A673 (cell line): ENCODE measurements at regions of chr13 and their contacts with region 1.

Region 1: DNA sequence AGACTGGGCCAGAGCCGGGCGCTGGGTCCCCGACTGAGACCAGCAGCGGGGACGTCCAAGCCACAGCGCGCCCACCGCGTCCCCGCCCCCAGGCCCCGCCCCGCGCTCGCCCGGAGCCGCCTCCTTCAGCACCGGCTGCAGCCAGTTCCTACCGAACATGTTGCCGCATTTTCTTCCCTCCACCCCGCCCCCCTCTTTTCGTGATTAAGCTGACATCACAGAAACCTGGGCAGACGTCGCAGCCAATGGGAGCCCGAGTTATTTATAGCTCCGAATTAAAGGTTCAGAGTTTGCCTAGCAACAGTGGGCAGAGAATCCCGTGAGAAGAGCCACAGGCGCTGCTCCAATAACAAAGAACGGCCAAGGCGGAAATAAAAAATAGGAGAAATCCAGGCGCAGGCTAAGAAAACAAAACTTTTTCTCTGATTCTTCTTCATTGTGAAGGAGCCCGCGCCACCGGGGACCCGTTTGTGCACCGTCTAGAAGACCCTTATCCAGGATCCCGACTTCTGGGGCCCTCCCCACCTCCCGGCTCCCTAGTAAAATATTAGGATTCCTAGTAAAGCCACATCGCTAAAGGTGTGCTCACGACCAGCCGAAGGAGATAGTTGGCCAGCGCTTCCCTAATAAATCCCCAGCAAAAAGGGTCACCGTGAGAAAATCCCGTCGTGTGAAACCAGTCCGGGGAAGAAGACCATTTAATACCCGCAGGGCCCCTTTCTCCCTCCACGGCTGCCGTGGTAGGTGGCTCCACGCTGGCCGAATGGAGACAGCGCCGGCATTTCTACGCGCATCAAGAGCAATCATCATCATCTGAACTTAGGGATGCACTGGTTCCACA is 61.7 kb downstream of the SERP2 start:
- DNase-seq: peak; percentile 99
- H3K4me3 ChIP-seq: peak overlapping the region; percentile 69
- H3K27ac ChIP-seq: peak overlapping the region; percentile 92
- H3K4me1 ChIP-seq: peaks cover 13% of the 10 kb centered on the region
- H3K27me3 ChIP-seq: no peaks in the 10 kb centered on the region
- CTCF ChIP-seq: no peak

Region 2: DNA sequence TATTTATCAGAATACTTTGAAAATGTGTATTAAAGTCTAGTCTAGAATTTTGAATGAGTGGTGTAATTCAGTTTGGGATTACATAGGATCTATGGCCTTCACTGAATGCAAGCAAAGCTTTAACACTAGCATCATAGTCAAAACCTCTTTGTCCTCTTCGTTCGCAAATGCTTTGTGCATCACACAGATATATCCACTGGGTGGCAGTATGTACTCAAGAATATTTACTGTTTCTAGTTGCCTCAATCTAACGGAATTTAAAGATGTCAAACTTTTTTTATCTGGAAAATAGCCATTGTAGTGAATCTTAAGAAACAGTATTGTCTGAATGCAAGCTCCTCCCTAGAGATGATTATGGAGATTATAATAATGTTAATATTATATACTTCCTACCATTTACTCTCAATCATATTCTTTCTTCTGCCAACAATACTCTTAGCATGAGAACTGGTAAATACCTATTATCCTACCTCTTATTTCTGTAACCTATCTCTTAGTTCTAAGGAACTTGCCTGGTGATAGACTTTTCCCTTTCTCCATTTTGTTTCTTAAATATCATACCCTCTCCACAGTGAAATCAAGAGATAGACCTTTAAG is 529.8 kb before region 1 on chr13:
- CTCF ChIA-PET with region 1: interaction called, 12 read pairs
- POLR2A ChIA-PET with region 1: no interaction called
- intact Hi-C with region 1: loop called (anchors 1 kb)
- DNase-seq: peak; percentile 76
- H3K4me3 ChIP-seq: no peak overlapping the region
- H3K27ac ChIP-seq: no peak overlapping the region
- H3K4me1 ChIP-seq: no peaks in the 10 kb centered on the region
- H3K27me3 ChIP-seq: no peaks in the 10 kb centered on the region
- CTCF ChIP-seq: peak; percentile 78

Region 3: GRCh38 chr13:44141725-44142539 is 293.4 kb before region 1 on chr13:
- CTCF ChIA-PET with region 1: interaction called, 3 read pairs
- POLR2A ChIA-PET with region 1: no interaction called
- intact Hi-C with region 1: loop called (anchors 5 kb)
- DNase-seq: peak; percentile 89
- H3K4me3 ChIP-seq: peak overlapping the region; percentile 59
- H3K27ac ChIP-seq: peak overlapping the region; percentile 87
- H3K4me1 ChIP-seq: peaks cover 9% of the 10 kb centered on the region
- H3K27me3 ChIP-seq: no peaks in the 10 kb centered on the region
- CTCF ChIP-seq: no peak

Region 4: DNA sequence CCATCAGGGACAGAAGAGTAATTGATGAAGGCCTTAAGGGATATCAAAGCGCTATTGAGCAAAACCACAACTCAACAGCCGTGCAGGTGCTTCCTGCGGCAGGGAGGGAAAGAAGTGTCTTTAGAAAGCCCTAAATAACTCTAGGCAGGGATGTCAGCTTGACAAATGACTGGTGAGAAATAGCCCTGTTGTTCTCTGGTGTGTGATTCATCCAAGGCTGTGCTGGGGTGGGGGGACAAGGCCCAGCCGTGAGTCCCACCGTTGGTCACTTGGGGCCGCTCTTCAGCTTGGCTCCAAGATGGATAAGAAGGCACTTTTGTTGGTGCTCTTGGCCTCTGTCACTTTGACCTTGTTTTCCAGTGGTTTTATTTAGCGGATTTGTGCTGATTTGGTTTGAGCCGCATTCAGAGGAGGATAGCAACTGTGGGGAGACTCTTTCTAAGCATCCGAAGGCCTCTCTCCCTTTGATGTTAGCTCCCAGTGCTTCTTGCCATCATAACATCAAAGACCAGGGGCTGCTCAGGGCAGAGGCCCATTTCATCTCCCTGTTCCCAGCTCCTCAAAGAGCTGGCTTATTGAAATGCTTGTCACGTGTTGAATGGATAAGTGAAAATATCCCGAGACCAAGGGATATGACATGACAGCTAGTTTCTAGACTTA is 192.0 kb before region 1 on chr13:
- CTCF ChIA-PET with region 1: no interaction called
- POLR2A ChIA-PET with region 1: no interaction called
- intact Hi-C with region 1: loop called (anchors 5 kb)
- DNase-seq: peak; percentile 26
- H3K4me3 ChIP-seq: no peak overlapping the region
- H3K27ac ChIP-seq: no peak overlapping the region
- H3K4me1 ChIP-seq: no peaks in the 10 kb centered on the region
- H3K27me3 ChIP-seq: no peaks in the 10 kb centered on the region
- CTCF ChIP-seq: peak; percentile 38

Region 5: GRCh38 chr13:44364348-44365049 is 70.9 kb before region 1 on chr13:
- CTCF ChIA-PET with region 1: no interaction called
- POLR2A ChIA-PET with region 1: no interaction called
- intact Hi-C with region 1: no loop called
- DNase-seq: no peak
- H3K4me3 ChIP-seq: no peak overlapping the region
- H3K27ac ChIP-seq: no peak overlapping the region
- H3K4me1 ChIP-seq: no peaks in the 10 kb centered on the region
- H3K27me3 ChIP-seq: no peaks in the 10 kb centered on the region
- CTCF ChIP-seq: no peak

Region 6: GRCh38 chr13:44404261-44405132 is 30.9 kb before region 1 on chr13:
- CTCF ChIA-PET with region 1: no interaction called
- POLR2A ChIA-PET with region 1: interaction called, 26 read pairs
- intact Hi-C with region 1: no loop called
- DNase-seq: no peak
- H3K4me3 ChIP-seq: no peak overlapping the region
- H3K27ac ChIP-seq: no peak overlapping the region
- H3K4me1 ChIP-seq: no peaks in the 10 kb centered on the region
- H3K27me3 ChIP-seq: no peaks in the 10 kb centered on the region
- CTCF ChIP-seq: no peak